HEK293T (cell line): ENCODE measurements at regions of chr19 and their contacts with region 1.

Region 1: DNA sequence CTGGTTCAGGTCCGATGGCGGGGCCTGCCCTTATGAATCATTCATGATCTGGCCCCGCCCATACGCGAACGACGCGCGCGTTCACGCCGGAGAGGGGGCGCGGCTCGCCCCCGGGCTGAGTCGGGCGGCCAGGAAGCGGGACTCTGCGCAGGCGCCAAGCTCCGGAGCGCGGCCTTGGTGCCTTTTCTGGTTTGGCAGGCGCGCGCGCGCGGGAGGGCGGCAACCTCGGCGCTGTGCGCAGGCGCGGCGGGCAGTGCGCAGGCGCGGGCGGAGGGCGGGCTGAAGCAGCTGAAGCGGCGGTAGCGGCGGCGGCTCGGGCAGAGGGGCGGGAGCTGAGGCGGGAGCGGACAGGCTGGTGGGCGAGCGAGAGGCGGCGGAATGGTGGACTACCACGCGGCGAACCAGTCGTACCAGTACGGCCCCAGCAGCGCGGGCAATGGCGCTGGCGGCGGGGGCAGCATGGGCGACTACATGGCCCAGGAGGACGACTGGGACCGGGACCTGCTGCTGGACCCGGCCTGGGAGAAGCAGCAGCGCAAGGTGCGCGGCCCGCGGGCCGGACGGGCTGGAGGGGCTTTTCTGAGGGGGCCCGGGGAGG is at the start of gene ACTN4:
- DNase-seq: peak; percentile 98

Region 2: GRCh38 chr19:38634757-38635482 is 12.5 kb before region 1 on chr19:
- CTCF ChIA-PET with region 1: interaction called, 19 read pairs
- POLR2A ChIA-PET with region 1: interaction called, 7 read pairs
- DNase-seq: peak; percentile 78

Region 3: DNA sequence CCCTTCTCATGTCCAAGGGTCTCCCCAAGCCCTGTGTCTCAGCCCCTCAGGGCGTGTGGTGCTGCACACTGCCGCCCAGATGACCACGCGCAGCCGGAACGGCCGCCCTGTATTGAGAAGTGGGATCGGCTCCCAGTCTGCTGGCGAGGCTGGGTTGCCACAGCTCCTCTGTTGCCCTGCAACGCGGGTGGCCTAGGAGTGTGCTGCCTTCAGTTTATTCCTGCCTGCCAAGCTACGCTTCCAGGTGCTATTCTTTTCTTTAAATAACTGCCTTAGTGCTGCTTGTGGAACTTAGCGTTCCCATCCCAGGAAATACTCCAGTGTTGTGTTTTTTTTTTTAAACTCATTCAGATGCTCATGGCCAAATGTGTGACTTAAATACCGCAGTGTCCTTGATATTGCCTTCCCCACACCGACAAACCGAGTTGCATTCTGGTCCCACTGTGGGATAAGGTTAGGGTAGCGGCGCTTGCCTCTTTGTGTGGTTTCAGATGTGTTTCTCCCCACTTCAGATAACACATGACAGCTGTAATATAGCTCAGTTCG is 16.6 kb after region 1 on chr19:
- CTCF ChIA-PET with region 1: no interaction called
- POLR2A ChIA-PET with region 1: interaction called, 14 read pairs
- DNase-seq: no peak